CD4-positive, alpha-beta memory T cell (primary cell): ENCODE measurements at regions of chr7 and their contacts with region 1.

Region 1: GRCh38 chr7:43439631-43440401 is 143.1 kb upstream of the STK17A start:
- DNase-seq: peak; percentile 20 to 50 (median 24)
- H3K4me3 ChIP-seq: no peak overlapping the region
- H3K4me3 Mint-ChIP-seq: no peak overlapping the region
- H3K27ac ChIP-seq: no peak overlapping the region
- H3K27ac Mint-ChIP-seq: no peak overlapping the region
- H3K4me1 ChIP-seq: no peaks in the 10 kb centered on the region
- H3K4me1 Mint-ChIP-seq: peaks cover 0 to 2% (median 0%) of the 10 kb centered on the region in 4 donors
- H3K27me3 ChIP-seq: peaks cover 4% of the 10 kb centered on the region
- H3K27me3 Mint-ChIP-seq: peaks cover 2 to 3% of the 10 kb centered on the region in 2 donors

Region 2: GRCh38 chr7:43220250-43220649 is 219.6 kb before region 1 on chr7:
- CTCF ChIA-PET with region 1: no interaction called
- POLR2A ChIA-PET with region 1: no interaction called
- intact Hi-C with region 1: no loop called
- DNase-seq: no peak
- H3K4me3 ChIP-seq: no peak overlapping the region
- H3K4me3 Mint-ChIP-seq: no peak overlapping the region
- H3K27ac ChIP-seq: no peak overlapping the region
- H3K27ac Mint-ChIP-seq: no peak overlapping the region
- H3K4me1 ChIP-seq: no peaks in the 10 kb centered on the region
- H3K4me1 Mint-ChIP-seq: no peaks in the 10 kb centered on the region
- H3K27me3 ChIP-seq: peaks cover 4% of the 10 kb centered on the region
- H3K27me3 Mint-ChIP-seq: peaks cover 9 to 11% of the 10 kb centered on the region in 2 donors

Region 3: DNA sequence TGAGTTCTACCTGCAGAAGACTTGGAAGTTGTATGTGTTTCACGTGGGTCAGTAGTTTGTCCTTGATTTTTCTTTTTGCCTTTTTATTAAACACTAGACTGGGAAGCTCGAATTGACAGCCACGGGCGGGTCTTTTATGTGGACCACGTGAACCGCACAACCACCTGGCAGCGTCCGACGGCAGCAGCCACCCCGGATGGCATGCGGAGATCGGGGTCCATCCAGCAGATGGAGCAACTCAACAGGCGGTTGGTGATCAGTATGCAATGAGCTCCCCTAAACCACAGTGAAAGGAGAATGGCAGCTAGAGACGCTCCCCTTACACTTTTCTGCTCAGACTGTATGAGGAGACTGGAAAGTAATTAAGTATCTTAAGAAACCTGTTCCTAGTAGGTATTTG is 16.4 kb after region 1 on chr7:
- CTCF ChIA-PET with region 1: interaction called, 15 read pairs
- POLR2A ChIA-PET with region 1: no interaction called
- intact Hi-C with region 1: no loop called
- DNase-seq: no peak
- H3K4me3 ChIP-seq: no peak overlapping the region
- H3K4me3 Mint-ChIP-seq: no peak overlapping the region
- H3K27ac ChIP-seq: no peak overlapping the region
- H3K27ac Mint-ChIP-seq: no peak overlapping the region
- H3K4me1 ChIP-seq: no peaks in the 10 kb centered on the region
- H3K4me1 Mint-ChIP-seq: peaks cover 0 to 1% (median 0%) of the 10 kb centered on the region in 4 donors
- H3K27me3 ChIP-seq: no peaks in the 10 kb centered on the region
- H3K27me3 Mint-ChIP-seq: peaks cover 2 to 3% of the 10 kb centered on the region in 2 donors

Region 4: GRCh38 chr7:43711503-43711902 is 271.7 kb after region 1 on chr7:
- CTCF ChIA-PET with region 1: interaction called, 4 read pairs
- POLR2A ChIA-PET with region 1: no interaction called
- intact Hi-C with region 1: loop called (anchors 5 kb)
- DNase-seq: no peak
- H3K4me3 ChIP-seq: no peak overlapping the region
- H3K4me3 Mint-ChIP-seq: no peak overlapping the region
- H3K27ac ChIP-seq: no peak overlapping the region
- H3K27ac Mint-ChIP-seq: no peak overlapping the region
- H3K4me1 ChIP-seq: no peaks in the 10 kb centered on the region
- H3K4me1 Mint-ChIP-seq: peaks cover 20 to 43% (median 26%) of the 10 kb centered on the region in 4 donors
- H3K27me3 ChIP-seq: no peaks in the 10 kb centered on the region
- H3K27me3 Mint-ChIP-seq: no peaks in the 10 kb centered on the region